ENCODE measurements at regions of chr2 and their contacts with region 1.

Region 1: GRCh38 chr2:217186668-217187159 is 326.9 kb upstream of the TNP1 start:
- DNase-seq: no peak
- H3K4me3 ChIP-seq: no peak overlapping the region
- H3K27ac ChIP-seq: peak overlapping the region; percentile 61 to 76 (median 65)
- H3K4me1 ChIP-seq: peaks cover 6 to 44% (median 34%) of the 10 kb centered on the region in 4 donors
- H3K27me3 ChIP-seq: peaks cover 0 to 3% (median 0%) of the 10 kb centered on the region in 4 donors
- CTCF ChIP-seq: no peak
- EP300 ChIP-seq: peak; percentile 20
- POLR2A ChIP-seq: no peak

Region 2: GRCh38 chr2:216838151-216838550 is 348.6 kb before region 1 on chr2:
- intact Hi-C with region 1: no loop called
- DNase-seq: no peak
- H3K4me3 ChIP-seq: no peak overlapping the region
- H3K27ac ChIP-seq: no peak overlapping the region
- H3K4me1 ChIP-seq: peaks cover 10 to 18% (median 14%) of the 10 kb centered on the region in 4 donors
- H3K27me3 ChIP-seq: no peaks in the 10 kb centered on the region
- CTCF ChIP-seq: no peak
- EP300 ChIP-seq: no peak
- POLR2A ChIP-seq: no peak

Region 3: DNA sequence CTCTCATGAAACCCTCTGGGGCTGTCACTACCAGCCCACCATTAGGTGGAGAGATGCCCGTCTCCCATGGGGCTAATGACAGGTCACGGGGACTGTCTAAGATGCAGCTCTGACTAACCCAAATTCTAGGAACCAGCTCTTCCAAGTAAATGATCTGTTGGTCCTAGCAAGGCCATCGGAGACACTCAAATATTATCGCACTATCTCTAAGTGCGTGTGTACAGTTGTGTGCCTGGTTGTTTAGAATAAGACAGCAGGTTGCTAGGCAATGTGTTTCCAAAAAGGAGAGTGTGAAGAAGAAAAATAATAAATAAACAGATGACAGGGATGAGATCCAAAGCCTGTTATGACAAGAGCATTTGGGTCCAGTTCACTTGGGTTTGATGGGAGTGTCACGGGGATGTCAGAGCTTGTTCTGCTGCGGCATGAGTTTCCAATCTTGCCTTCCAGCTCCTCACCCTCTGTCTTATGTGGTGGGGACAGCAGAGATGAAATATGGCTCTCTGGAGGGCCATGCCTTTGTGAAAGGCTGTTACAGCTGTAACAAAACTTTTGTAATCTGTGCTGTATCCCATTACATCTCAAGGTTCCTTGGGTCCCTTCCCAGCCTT is 199.4 kb before region 1 on chr2:
- intact Hi-C with region 1: no loop called
- DNase-seq: peak; percentile 91
- H3K4me3 ChIP-seq: no peak overlapping the region
- H3K27ac ChIP-seq: peak overlapping the region; percentile 11 to 50 (median 39)
- H3K4me1 ChIP-seq: peaks cover 0 to 22% (median 19%) of the 10 kb centered on the region in 4 donors
- H3K27me3 ChIP-seq: no peaks in the 10 kb centered on the region
- CTCF ChIP-seq: no peak
- EP300 ChIP-seq: no peak
- POLR2A ChIP-seq: no peak

Region 4: GRCh38 chr2:217360781-217361482 is 174.2 kb after region 1 on chr2:
- intact Hi-C with region 1: loop called (anchors 10 kb)
- DNase-seq: peak; percentile 91
- H3K4me3 ChIP-seq: peak overlapping the region in 1 of 4 donors; percentile 1
- H3K27ac ChIP-seq: peak overlapping the region; percentile 82 to 86 (median 84)
- H3K4me1 ChIP-seq: peaks cover 37 to 98% (median 84%) of the 10 kb centered on the region in 4 donors
- H3K27me3 ChIP-seq: no peaks in the 10 kb centered on the region
- CTCF ChIP-seq: peak in 1 of 3 experiments; percentile 33
- EP300 ChIP-seq: no peak
- POLR2A ChIP-seq: no peak

Measured in esophagus muscularis mucosa (tissue), 4 donors.